CD4-positive, alpha-beta memory T cell (primary cell): ENCODE measurements at regions of chr12 and their contacts with region 1.

Region 1: DNA sequence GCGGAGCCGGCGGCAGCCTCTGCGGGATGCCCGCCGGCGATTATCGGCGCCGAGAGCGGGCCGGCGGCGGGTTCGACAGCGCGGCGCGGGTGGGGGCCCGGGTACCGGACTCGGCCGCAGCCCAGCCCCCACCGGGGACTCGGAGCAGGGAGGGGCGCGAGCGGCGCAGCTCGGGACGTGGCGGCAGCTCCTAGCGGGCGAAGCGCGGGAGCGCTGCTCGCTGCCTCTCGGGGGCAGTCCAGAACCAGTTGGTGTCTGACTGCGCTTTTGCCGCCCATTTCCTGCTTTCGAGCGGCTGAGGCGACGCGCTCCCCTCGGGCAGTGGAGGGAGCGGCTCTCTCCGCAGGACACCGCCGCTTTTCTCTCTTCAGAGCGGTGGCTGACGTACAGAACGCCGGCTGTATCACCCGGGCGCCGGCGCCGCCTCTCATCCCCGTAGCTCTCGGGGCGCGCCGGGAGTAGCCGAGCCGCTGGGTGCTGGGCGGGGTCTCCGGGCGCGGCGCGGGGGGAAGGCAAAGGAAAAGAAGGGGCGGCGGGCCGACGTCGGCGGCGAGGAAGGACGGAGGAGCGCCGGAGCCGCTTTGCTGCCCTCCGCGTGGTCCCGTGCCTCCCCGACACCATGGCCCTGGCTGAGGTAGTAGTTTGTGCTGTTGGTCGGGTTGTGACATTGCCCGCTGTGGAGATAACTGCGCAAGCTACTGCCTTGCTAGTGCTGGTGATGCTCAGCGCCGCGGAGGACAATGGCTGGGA is 136.6 kb downstream of the MON2 start:
- DNase-seq: peak; percentile 85 to 91 (median 88)
- H3K4me3 ChIP-seq: peak overlapping the region; percentile 64 to 94
- H3K4me3 Mint-ChIP-seq: peak overlapping the region; percentile 86 to 97 (median 94)
- H3K27ac ChIP-seq: peak overlapping the region; percentile 100
- H3K27ac Mint-ChIP-seq: peak overlapping the region; percentile 93 to 100 (median 99)
- H3K4me1 ChIP-seq: peaks cover 39% of the 10 kb centered on the region
- H3K4me1 Mint-ChIP-seq: peaks cover 27 to 55% (median 35%) of the 10 kb centered on the region in 4 donors
- H3K27me3 ChIP-seq: no peaks in the 10 kb centered on the region
- H3K27me3 Mint-ChIP-seq: no peaks in the 10 kb centered on the region

Region 2: DNA sequence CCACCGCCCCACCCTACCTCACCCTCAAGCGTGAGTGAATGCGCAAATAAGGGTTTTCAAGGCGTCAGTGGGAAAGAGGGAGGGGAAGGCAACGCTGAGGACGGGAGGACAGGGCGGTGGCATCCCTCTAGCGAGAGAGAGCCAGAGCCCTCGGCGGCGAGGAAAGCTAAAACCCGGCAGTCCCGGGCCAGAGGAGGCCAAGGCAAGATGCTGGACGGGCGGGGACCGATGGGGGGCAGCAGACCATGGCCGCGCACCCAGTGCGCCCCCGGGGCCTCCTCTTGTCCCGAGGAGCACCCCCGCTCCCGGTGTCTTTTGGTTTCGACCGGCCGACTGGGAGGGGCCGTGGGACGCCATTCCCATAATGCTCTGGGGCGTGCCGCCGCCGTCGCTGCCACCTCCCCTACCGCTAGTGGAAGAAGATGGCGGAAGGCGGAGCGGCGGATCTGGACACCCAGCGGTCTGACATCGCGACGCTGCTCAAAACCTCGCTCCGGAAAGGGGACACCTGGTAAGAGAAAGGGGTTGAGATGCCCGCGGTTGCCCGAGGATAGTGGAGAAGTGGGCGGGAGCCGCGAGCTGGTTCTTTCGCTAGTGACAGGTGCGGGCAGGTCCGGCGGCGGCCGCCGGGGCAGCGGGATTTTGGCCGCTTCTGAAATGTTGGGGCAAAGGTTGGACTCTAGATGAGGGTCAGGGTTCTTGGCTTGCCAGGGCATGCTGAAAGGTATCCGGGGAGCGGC is 343.1 kb before region 1 on chr12 and contains the start of gene USP15:
- CTCF ChIA-PET with region 1: interaction called, 3 read pairs
- POLR2A ChIA-PET with region 1: interaction called, 21 read pairs
- intact Hi-C with region 1: loop called (anchors 1 kb)
- DNase-seq: peak; percentile 95 to 98 (median 97)
- H3K4me3 ChIP-seq: peak within 1 kb of the TSS; percentile 82 to 94
- H3K4me3 Mint-ChIP-seq: peak within 1 kb of the TSS; percentile 93 to 100 (median 98)
- H3K27ac ChIP-seq: peak within 1 kb of the TSS; percentile 90
- H3K27ac Mint-ChIP-seq: peak within 1 kb of the TSS; percentile 95 to 100 (median 99)
- H3K4me1 ChIP-seq: peaks cover 71% of the 10 kb centered on the region
- H3K4me1 Mint-ChIP-seq: peaks cover 31 to 76% (median 41%) of the 10 kb centered on the region in 4 donors
- H3K27me3 ChIP-seq: no peaks in the 10 kb centered on the region
- H3K27me3 Mint-ChIP-seq: no peaks in the 10 kb centered on the region
- total RNA-seq, gene USP15: 150 to 156 TPM

Region 3: GRCh38 chr12:62466594-62467491 is 136.4 kb before region 1 on chr12 and contains the start of gene MON2:
- CTCF ChIA-PET with region 1: interaction called, 6 read pairs
- POLR2A ChIA-PET with region 1: interaction called, 38 read pairs
- intact Hi-C with region 1: loop called (anchors 1 kb)
- DNase-seq: peak; percentile 86 to 88 (median 87)
- H3K4me3 ChIP-seq: peak within 1 kb of the TSS; percentile 72 to 83
- H3K4me3 Mint-ChIP-seq: peak within 1 kb of the TSS; percentile 83 to 97 (median 94)
- H3K27ac ChIP-seq: peak within 1 kb of the TSS; percentile 91
- H3K27ac Mint-ChIP-seq: peak within 1 kb of the TSS; percentile 85 to 99 (median 97)
- H3K4me1 ChIP-seq: peaks cover 42% of the 10 kb centered on the region
- H3K4me1 Mint-ChIP-seq: peaks cover 19 to 31% (median 23%) of the 10 kb centered on the region in 4 donors
- H3K27me3 ChIP-seq: no peaks in the 10 kb centered on the region
- H3K27me3 Mint-ChIP-seq: peaks cover 0 to 3% of the 10 kb centered on the region in 2 donors
- total RNA-seq, gene MON2: 82.0 to 88.5 TPM

Region 4: DNA sequence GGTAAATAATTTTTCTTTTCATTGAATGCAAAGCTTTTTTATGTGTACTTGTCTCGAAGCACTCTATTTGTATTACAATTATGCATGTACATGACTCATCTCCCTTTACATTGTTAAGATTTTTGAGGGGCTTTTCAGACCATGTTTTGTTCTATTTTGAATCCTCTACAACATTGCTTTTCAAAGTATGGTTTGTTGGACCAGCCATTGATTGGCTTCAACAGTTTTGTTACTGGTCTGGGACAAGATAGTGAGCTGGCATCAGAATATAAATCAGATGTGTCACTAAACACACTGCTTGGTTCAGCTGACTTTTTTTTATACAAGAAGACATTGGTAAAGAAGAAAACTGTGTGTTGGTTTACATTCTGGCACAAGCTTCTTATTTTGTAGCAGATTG is 14.3 kb before region 1 on chr12:
- CTCF ChIA-PET with region 1: interaction called, 4 read pairs
- POLR2A ChIA-PET with region 1: interaction called, 28 read pairs
- intact Hi-C with region 1: no loop called
- DNase-seq: no peak
- H3K4me3 ChIP-seq: no peak overlapping the region
- H3K4me3 Mint-ChIP-seq: no peak overlapping the region
- H3K27ac ChIP-seq: no peak overlapping the region
- H3K27ac Mint-ChIP-seq: no peak overlapping the region
- H3K4me1 ChIP-seq: no peaks in the 10 kb centered on the region
- H3K4me1 Mint-ChIP-seq: no peaks in the 10 kb centered on the region
- H3K27me3 ChIP-seq: no peaks in the 10 kb centered on the region
- H3K27me3 Mint-ChIP-seq: no peaks in the 10 kb centered on the region

Region 5: GRCh38 chr12:62703011-62703380 is 99.8 kb after region 1 on chr12:
- CTCF ChIA-PET with region 1: no interaction called
- POLR2A ChIA-PET with region 1: no interaction called
- intact Hi-C with region 1: no loop called
- DNase-seq: no peak
- H3K4me3 ChIP-seq: no peak overlapping the region
- H3K4me3 Mint-ChIP-seq: no peak overlapping the region
- H3K27ac ChIP-seq: no peak overlapping the region
- H3K27ac Mint-ChIP-seq: no peak overlapping the region
- H3K4me1 ChIP-seq: no peaks in the 10 kb centered on the region
- H3K4me1 Mint-ChIP-seq: no peaks in the 10 kb centered on the region
- H3K27me3 ChIP-seq: no peaks in the 10 kb centered on the region
- H3K27me3 Mint-ChIP-seq: no peaks in the 10 kb centered on the region

Region 6: GRCh38 chr12:62793256-62794217 is 190.3 kb after region 1 on chr12:
- CTCF ChIA-PET with region 1: interaction called, 16 read pairs
- POLR2A ChIA-PET with region 1: interaction called, 13 read pairs
- intact Hi-C with region 1: loop called (anchors 1 kb)
- DNase-seq: peak; percentile 51 to 69 (median 66)
- H3K4me3 ChIP-seq: no peak overlapping the region
- H3K4me3 Mint-ChIP-seq: no peak overlapping the region
- H3K27ac ChIP-seq: no peak overlapping the region
- H3K27ac Mint-ChIP-seq: no peak overlapping the region
- H3K4me1 ChIP-seq: no peaks in the 10 kb centered on the region
- H3K4me1 Mint-ChIP-seq: peaks cover 0 to 2% (median 0%) of the 10 kb centered on the region in 4 donors
- H3K27me3 ChIP-seq: no peaks in the 10 kb centered on the region
- H3K27me3 Mint-ChIP-seq: peaks cover 3 to 5% of the 10 kb centered on the region in 2 donors

Region 7: GRCh38 chr12:63770375-63770774 is 1167.1 kb after region 1 on chr12:
- CTCF ChIA-PET with region 1: no interaction called
- POLR2A ChIA-PET with region 1: no interaction called
- intact Hi-C with region 1: loop called (anchors 5 kb)
- DNase-seq: no peak
- H3K4me3 ChIP-seq: no peak overlapping the region
- H3K4me3 Mint-ChIP-seq: no peak overlapping the region
- H3K27ac ChIP-seq: no peak overlapping the region
- H3K27ac Mint-ChIP-seq: no peak overlapping the region
- H3K4me1 ChIP-seq: no peaks in the 10 kb centered on the region
- H3K4me1 Mint-ChIP-seq: no peaks in the 10 kb centered on the region
- H3K27me3 ChIP-seq: no peaks in the 10 kb centered on the region
- H3K27me3 Mint-ChIP-seq: peaks cover 7 to 11% of the 10 kb centered on the region in 2 donors

Region 8: DNA sequence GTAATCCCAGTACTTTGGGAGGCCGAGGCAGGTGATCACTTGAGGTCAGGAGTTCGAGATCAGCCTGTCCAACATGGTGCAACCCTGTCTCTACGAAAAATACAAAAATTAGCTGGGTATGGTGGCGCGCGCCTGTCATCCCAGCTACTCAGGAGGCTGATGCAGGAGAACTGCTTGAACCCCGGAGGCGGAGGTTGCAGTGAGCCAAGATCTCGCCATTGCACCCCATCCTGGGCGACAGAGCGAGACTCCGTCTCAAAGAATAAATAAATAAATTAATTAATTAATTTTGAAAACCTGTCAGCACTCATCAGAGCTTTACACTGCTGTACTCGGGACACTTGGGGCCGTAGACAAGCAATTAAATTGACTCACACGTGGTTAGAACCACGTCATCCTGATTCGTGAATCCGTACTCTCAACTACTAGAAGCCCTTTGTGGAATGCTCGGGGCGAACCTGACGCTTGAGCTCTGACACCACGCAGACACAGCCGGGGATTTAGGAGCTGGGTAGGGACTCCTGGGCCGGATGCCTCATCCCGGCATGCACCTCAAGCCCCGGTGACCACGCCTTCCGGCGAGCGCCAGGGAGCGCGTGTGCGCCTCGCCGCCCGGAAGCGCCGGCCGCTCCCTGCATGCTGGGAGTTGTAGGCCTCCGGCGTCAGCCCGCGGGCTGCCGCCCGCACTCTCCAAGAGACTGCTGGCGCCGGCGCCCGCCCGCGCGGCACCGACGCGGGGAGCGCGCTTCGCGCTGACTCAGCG is 1800.7 kb after region 1 on chr12 and contains the start of gene XPOT:
- CTCF ChIA-PET with region 1: no interaction called
- POLR2A ChIA-PET with region 1: no interaction called
- intact Hi-C with region 1: loop called (anchors 5 kb)
- DNase-seq: peak; percentile 91 to 95 (median 94)
- H3K4me3 ChIP-seq: peak within 1 kb of the TSS; percentile 78 to 86
- H3K4me3 Mint-ChIP-seq: peak within 1 kb of the TSS; percentile 90 to 98 (median 96)
- H3K27ac ChIP-seq: peak within 1 kb of the TSS; percentile 91
- H3K27ac Mint-ChIP-seq: peak within 1 kb of the TSS; percentile 94 to 98 (median 97)
- H3K4me1 ChIP-seq: peaks cover 33% of the 10 kb centered on the region
- H3K4me1 Mint-ChIP-seq: peaks cover 21 to 49% (median 37%) of the 10 kb centered on the region in 4 donors
- H3K27me3 ChIP-seq: no peaks in the 10 kb centered on the region
- H3K27me3 Mint-ChIP-seq: no peaks in the 10 kb centered on the region
- total RNA-seq, gene XPOT: 88.8 TPM